Activated T-helper 1 cell treated with anti-CD3 and anti-CD28 coated beads, Interleukin-12 subunit alpha, Interleukin-12 subunit beta, Interleukin-2, Interleukin-4 antibody, amounts not matched to agents 30 ng/mL and 10 ng/mL and 1 ng/mL, durations not matched to agents 14 hours and 24 hours and 36 hours (primary cell): ENCODE measurements at regions of chr9 and their contacts with region 1.

Region 1: DNA sequence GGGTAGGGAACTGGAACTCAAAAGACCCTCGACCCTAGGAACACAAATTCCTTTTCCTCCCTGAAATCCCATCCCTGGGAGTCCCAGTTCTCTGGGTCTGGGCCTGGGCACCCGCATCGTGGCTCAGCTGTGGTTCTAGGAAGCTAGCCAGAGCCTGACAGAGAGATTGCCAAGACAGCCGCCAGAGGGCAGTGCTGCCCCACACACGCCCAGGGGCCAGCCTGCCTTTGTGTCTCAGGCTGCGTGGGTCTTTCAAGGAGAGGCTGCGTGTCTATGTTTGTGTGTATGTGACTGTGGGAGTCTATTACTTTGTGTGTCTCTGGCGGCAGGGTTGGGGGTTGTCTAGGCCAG is 32.0 kb upstream of the TTLL11 start:
- DNase-seq: peak; percentile 60
- H3K4me3 Mint-ChIP-seq: no peak overlapping the region
- H3K27ac Mint-ChIP-seq: no peak overlapping the region
- H3K4me1 Mint-ChIP-seq: peaks cover 5% of the 10 kb centered on the region
- H3K27me3 Mint-ChIP-seq: peaks cover 29% of the 10 kb centered on the region

Region 2: DNA sequence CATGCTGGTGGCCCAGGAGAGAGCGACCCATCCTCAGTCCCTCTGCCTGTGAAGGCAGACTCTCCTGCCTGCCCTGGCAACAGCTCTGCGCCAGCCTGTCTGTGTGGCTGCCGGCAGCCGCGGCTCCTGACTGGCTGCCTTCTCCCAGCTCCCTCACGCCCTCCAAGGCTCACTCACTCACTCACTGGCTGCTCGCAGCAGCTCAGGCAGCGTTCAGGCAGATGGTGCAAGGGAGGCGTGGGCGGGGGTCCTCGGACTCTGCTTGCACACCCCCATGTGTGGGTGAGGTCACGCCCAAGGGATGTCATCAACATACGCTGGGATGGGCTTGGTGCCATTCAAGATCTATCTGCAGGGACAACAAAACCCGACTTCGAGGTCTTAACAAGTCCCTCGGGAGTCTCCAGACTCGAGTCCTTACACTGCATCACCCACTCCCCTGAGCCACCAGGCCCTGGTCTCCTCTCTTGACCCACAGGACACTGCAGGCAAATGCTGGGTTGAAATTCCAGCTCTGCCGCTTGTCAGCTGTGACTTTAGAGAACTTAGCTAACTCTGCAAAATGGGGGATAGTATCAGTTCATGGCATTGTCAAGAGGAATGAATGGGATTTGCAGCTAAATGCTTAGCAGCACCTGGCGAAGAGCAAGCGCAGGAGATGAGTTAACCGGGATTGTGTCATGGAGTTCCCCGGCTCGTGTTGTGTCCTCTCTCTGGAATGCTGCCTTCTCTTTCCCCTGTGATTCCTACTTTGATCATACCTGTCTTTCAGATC is 406.9 kb before region 1 on chr9:
- intact Hi-C with region 1: no loop called
- DNase-seq: no peak
- H3K4me3 Mint-ChIP-seq: no peak overlapping the region
- H3K27ac Mint-ChIP-seq: no peak overlapping the region
- H3K4me1 Mint-ChIP-seq: no peaks in the 10 kb centered on the region
- H3K27me3 Mint-ChIP-seq: no peaks in the 10 kb centered on the region

Region 3: DNA sequence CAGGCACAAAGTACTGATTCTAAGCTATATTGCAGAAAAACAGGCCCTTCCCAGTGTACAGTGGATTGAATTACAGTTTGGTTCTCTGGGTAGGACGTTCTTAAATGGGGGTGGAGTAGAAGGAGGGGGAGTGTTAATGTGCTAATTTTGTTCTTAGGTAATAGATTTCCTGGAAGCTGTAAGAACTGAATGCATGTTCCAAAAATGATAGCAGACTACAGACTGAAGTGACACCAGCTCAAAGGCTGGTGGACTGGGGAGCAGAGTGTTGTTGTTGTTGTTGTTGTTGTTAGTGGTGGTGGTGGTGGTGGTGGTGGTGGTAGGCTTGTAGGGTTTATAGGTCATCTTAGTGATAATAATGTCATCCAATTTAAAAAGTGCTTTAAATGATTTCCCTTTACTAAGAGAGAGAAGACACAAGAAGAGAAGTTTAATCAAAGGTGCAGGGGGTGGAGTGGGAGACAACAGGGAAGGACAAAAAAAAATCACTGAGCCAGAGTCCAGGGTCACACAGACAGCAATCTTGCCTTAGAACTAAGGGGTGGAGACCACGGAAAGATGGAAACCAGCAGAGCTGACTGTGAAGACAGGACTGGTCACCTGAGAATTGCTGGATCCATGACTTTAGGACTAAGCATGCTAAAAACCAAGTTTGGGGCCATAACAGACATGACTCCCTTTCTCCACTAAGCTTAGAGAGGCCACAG is 59.1 kb before region 1 on chr9:
- intact Hi-C with region 1: no loop called
- DNase-seq: no peak
- H3K4me3 Mint-ChIP-seq: no peak overlapping the region
- H3K27ac Mint-ChIP-seq: no peak overlapping the region
- H3K4me1 Mint-ChIP-seq: no peaks in the 10 kb centered on the region
- H3K27me3 Mint-ChIP-seq: no peaks in the 10 kb centered on the region

Region 4: DNA sequence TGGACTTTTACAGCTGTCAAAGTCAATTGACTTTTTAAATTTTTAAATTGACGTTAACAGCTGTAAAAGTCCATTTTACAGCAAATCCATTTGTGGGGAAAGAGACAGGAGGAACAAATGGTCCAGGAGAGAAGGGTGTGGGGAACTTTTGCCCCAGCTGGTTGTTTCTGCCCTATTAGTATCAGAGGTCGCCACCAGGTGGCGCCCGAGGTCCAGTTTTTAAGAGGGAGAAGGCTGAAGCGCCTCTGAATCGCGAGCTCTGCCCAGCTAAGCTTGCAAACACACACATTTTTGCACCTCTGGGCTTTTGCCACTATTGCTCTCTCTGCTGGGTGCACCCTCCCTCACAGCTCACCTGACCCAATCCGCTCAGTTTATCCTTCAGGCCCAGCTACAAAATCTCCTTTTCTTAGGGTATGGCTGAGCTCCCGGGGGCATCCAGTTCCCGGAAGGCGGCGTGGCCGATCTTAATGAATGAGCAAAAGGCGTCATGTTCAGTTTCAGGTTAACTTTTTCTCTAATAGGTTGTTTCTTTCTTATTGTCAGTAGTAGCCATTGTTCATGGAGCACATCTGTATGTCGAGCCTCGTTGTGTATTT is 25.8 kb before region 1 on chr9:
- intact Hi-C with region 1: loop called (anchors 1 kb)
- DNase-seq: peak; percentile 58
- H3K4me3 Mint-ChIP-seq: no peak overlapping the region
- H3K27ac Mint-ChIP-seq: no peak overlapping the region
- H3K4me1 Mint-ChIP-seq: peaks cover 17% of the 10 kb centered on the region
- H3K27me3 Mint-ChIP-seq: peaks cover 9% of the 10 kb centered on the region

Region 5: GRCh38 chr9:122110100-122110833 is 14.9 kb before region 1 on chr9:
- intact Hi-C with region 1: no loop called
- DNase-seq: no peak
- H3K4me3 Mint-ChIP-seq: no peak overlapping the region
- H3K27ac Mint-ChIP-seq: no peak overlapping the region
- H3K4me1 Mint-ChIP-seq: no peaks in the 10 kb centered on the region
- H3K27me3 Mint-ChIP-seq: peaks cover 2% of the 10 kb centered on the region

Region 6: DNA sequence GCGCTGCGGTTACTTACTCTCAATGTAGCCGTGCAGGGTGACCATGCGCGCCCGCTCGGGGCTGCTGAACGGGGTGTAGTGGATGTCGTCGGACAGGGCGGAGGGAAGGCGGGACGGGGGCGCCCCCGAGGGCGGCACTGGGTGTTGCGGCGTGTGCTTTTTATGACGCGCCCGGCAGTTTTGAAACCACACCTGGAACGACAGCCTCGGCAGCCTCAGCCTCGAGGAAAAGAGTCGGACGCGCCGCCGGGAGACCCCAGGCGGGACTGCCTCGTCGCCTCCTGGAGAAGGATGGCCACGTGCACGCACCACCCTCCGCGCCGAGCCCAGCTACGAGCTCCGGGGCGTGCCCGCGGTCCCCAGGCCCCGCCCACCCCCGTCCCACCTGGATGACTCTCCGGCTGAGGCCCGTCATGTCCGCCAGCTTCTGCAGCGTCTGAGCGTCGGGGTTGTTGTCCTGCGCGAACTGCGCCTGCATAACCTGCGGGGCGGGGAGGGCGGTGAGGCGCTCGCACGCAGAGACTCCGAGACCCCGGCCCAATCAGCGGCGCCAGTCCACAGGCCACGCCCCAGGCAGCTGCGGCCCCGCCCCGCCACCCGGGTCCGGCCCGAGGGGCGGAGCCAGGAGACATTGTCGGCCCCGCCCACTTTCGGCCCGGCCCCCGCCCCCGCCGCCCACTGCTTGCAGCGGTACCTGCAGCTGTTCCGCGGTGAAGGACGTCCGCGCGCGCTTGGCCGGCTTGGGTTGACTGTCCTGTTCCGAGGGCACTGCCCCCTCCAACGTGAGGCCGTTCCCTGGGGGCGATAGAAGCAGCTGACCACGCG is 88.7 kb after region 1 on chr9:
- intact Hi-C with region 1: loop called (anchors 10 kb)
- DNase-seq: peak; percentile 59
- H3K4me3 Mint-ChIP-seq: peak overlapping the region; percentile 72
- H3K27ac Mint-ChIP-seq: no peak overlapping the region
- H3K4me1 Mint-ChIP-seq: peaks cover 18% of the 10 kb centered on the region
- H3K27me3 Mint-ChIP-seq: peaks cover 66% of the 10 kb centered on the region

Region 7: GRCh38 chr9:122228568-122229484 is 103.7 kb after region 1 on chr9 and contains the start of gene LHX6:
- intact Hi-C with region 1: no loop called
- DNase-seq: no peak
- H3K4me3 Mint-ChIP-seq: no peak within 1 kb of the TSS
- H3K27ac Mint-ChIP-seq: no peak within 1 kb of the TSS
- H3K4me1 Mint-ChIP-seq: no peaks in the 10 kb centered on the region
- H3K27me3 Mint-ChIP-seq: peaks cover 32% of the 10 kb centered on the region
- total RNA-seq, gene LHX6: 0.08 TPM in 1 of 2 replicates, not detected in the other

Region 8: GRCh38 chr9:122350638-122351355 is 225.7 kb after region 1 on chr9:
- intact Hi-C with region 1: loop called (anchors 1 kb)
- DNase-seq: peak; percentile 63
- H3K4me3 Mint-ChIP-seq: no peak overlapping the region
- H3K27ac Mint-ChIP-seq: no peak overlapping the region
- H3K4me1 Mint-ChIP-seq: peaks cover 15% of the 10 kb centered on the region
- H3K27me3 Mint-ChIP-seq: peaks cover 27% of the 10 kb centered on the region